Right ventricle myocardium inferior (tissue), 1 donor: ENCODE measurements at regions of chr15 and their contacts with region 1.

Region 1: DNA sequence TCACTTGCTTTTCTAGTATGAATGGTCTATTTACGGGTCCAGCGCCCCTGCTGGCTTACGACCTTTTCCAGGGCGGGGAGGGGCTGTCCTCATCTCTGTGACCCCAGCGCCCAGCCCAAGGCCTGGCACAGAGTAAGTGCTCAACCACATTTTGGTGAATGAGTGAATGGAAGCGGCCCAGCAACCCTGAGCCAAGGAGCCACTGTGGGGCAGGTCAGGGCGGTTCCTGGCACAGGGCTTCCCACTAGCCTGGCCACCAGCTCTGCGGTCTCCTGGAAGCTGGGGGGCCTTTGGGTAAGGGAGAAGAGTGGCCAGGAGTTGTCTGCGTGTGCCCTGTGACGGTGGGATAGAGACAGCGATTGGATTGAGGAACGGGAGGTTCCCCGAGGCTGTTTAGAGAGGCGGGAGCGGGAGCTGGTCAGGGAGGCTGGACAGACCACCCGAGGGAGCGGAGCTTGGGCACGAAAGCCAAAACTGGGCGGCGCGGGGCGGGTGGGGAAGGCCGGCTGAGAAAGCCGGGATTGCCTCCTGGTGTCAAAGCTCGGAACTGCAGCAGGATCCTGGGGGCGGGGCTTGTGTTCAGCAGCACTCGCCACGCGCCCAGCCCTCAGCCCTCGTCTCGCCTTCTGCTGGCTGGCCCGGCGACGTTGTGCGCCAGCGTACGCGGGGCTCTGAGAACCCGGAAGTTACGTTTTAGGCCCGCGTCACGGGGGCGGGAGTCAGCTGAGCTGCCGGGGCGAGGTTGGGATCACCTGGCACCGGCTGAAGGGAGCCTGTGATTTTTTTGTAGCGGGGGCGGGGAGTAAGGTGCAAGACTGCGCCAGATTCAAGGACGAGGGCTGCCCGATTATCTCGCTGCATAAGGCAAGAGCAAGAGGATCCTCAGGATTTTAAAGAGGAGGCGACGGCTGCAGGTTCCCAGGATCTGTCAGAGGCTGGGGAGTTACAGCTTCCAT is at the start of gene VPS18:
- DNase-seq: peak; percentile 99
- ATAC-seq: peak; percentile 98
- total RNA-seq, gene VPS18: 20.6 TPM

Region 2: GRCh38 chr15:40593588-40594428 is 300.2 kb before region 1 on chr15 and contains the start of gene KNL1:
- intact Hi-C with region 1: loop called (anchors 2 kb)
- DNase-seq: peak; percentile 93
- ATAC-seq: peak; percentile 95
- total RNA-seq, gene KNL1: 0.54 TPM

Region 3: DNA sequence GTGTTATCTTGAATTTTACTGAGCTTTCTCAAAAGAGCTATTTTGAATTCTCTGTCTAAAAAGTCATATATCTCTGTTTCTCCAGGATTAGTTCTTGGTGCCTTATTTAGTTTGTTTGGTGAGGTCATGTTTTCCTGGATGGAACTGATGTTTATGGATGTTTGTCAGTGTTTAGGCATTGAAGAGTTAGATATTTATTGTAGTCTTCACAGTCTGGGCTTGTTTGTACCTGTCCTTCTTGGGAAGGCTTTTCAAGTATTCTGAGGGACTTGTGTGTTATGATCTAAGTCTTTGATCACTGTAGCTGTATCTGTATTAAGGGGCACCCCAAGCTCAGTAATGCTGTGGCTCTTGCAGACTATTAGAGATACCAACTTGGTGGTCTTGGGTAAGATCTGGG is 209.6 kb before region 1 on chr15:
- intact Hi-C with region 1: loop called (anchors 2 kb)
- DNase-seq: no peak
- ATAC-seq: no peak

Region 4: DNA sequence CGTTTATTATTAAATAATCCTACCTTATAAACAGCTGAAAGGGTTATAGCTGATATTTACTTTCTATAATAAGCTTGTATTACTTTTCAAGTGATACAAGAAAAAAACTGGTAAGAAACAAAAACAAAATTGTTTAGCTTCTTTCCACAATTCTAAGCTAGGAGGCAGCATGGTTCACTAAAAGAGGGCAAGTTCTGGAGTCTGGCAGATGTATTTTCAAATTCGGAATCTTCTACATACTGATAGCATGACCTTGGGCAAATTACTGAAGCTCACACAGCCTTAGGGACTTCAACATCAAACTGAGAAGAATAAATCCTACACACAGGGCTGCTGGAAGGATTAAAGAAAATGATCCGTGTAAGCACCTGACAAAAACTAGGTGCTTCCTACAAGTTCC is 108.8 kb before region 1 on chr15:
- intact Hi-C with region 1: loop called (anchors 2 kb)
- DNase-seq: no peak
- ATAC-seq: no peak

Region 5: DNA sequence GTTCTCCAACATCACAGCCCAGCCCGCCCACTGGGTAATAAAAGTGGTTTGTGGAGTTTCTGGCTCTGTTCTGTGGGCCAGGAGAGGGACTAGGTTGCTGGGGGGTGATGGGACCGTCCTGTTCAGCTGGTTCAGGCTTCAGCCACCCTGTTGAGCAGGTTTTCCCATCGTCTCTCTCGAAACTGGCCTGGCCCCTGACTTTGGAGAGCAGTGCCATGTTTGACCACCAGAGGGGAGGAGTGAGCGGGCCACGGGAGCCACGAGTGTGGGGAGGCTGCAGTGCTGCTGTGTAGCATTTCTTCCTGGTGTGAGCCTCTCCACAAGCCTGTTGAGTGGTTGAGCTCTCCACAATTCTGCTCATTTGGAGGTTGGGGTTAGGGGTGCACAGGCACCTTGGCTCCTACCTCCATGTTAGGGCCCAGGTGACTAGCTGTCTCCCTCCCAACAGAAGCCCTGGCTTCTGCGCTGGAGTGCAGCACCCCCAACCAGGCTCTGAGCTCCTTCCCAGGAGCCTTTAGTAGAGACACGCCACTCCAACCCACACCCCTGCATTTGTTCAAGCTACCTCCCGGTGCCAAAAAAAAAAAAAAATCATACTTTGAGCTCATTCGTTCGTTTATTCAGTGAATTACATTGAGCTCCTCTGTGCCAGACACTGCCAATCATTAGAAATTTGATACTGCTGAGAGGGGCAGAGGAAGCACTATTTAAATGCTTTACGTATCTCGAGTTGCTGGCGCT is 36.2 kb before region 1 on chr15:
- intact Hi-C with region 1: loop called (anchors 1 kb)
- DNase-seq: peak; percentile 87
- ATAC-seq: peak; percentile 85